GM13977 (cell line): ENCODE measurements at regions of chr6 and their contacts with region 1.

Region 1: GRCh38 chr6:2353412-2354137 is 108.2 kb upstream of the GMDS start:
- DNase-seq: peak; percentile 61
- CTCF ChIP-seq: peak; percentile 78

Region 2: DNA sequence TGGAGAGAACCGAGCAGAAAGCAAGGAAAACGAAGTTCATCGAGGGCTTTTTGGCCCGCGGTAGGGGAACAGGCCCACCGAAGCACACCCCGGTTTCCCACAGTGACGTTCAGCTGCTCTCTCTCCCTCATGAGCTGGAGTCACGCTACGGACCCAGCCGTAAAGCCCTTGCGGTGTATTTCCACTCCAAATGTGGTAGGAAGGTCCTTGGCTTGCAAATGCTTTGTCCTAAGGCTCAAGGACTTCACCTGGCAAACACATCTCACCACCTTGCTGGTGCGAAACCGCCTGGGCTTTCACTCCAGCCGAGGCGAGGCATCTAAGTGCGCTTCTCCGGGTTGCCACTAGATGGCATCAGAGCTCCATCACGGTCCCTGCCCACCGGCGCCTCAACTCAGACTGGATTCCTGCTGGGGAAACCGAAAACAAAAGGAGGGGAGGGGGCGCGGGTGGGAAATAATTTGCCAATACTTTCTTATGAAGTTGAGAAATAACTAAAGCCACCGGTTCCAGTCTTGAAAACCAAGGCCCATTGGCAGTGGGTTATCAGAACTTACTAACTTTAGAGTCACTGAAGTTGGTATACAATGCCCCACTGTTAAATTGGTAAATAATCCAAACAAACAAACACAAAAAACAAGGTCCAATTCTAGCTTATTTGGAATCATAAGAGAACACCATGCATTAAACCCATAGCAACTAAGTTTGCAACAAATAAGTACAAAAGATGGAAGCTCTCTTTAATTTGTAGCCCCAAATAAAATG is 757.3 kb before region 1 on chr6:
- in situ Hi-C with region 1: loop called (anchors 10 kb)
- DNase-seq: peak; percentile 87
- CTCF ChIP-seq: peak; percentile 94

Region 3: DNA sequence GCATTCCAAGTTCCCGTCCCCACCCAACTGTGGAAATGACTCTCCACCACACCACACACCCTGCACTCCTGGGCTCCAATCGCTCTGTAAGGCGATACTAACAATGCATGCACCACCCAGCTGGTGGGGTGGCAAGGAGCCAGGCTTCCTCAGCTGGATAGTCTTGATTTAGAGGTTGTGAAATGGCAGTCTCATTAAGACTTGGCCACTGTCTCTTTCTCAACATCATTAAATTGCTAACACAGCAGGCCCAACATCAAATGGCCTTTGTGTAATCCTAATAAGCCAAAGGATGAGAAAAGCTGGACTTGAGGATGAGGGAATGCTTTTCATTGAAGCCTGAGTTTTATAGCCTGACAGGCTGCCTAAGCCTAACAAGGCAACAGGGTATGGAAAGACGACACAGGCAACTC is 331.9 kb before region 1 on chr6:
- in situ Hi-C with region 1: no loop called
- DNase-seq: no peak
- CTCF ChIP-seq: no peak

Region 4: GRCh38 chr6:2103644-2104523 is 249.7 kb before region 1 on chr6:
- in situ Hi-C with region 1: loop called (anchors 25 kb)
- DNase-seq: peak; percentile 36
- CTCF ChIP-seq: peak; percentile 62

Region 5: GRCh38 chr6:2215342-2215741 is 138.2 kb before region 1 on chr6:
- in situ Hi-C with region 1: loop called (anchors 10 kb)
- DNase-seq: no peak
- CTCF ChIP-seq: no peak